Activated CD4-positive, alpha-beta memory T cell treated with anti-CD3 and anti-CD28 coated beads for 36 hours (primary cell): ENCODE measurements at regions of chr3 and their contacts with region 1.

Region 1: GRCh38 chr3:71423151-71423906 is 160.2 kb downstream of the FOXP1 start:
- DNase-seq: no peak
- H3K4me3 Mint-ChIP-seq: no peak overlapping the region
- H3K27ac Mint-ChIP-seq: peak overlapping the region; percentile 85
- H3K4me1 Mint-ChIP-seq: peaks cover 81% of the 10 kb centered on the region
- H3K27me3 Mint-ChIP-seq: no peaks in the 10 kb centered on the region

Region 2: GRCh38 chr3:71380096-71380495 is 43.2 kb before region 1 on chr3:
- CTCF ChIA-PET with region 1: no interaction called
- POLR2A ChIA-PET with region 1: interaction called, 3 read pairs
- intact Hi-C with region 1: loop called (anchors 1 kb)
- DNase-seq: no peak
- H3K4me3 Mint-ChIP-seq: no peak overlapping the region
- H3K27ac Mint-ChIP-seq: peak overlapping the region; percentile 85
- H3K4me1 Mint-ChIP-seq: peaks cover 82% of the 10 kb centered on the region
- H3K27me3 Mint-ChIP-seq: no peaks in the 10 kb centered on the region

Region 3: GRCh38 chr3:71485896-71486295 is 62.6 kb after region 1 on chr3:
- CTCF ChIA-PET with region 1: no interaction called
- POLR2A ChIA-PET with region 1: no interaction called
- intact Hi-C with region 1: no loop called
- DNase-seq: no peak
- H3K4me3 Mint-ChIP-seq: no peak overlapping the region
- H3K27ac Mint-ChIP-seq: peak overlapping the region; percentile 61
- H3K4me1 Mint-ChIP-seq: peaks cover 82% of the 10 kb centered on the region
- H3K27me3 Mint-ChIP-seq: no peaks in the 10 kb centered on the region

Region 4: DNA sequence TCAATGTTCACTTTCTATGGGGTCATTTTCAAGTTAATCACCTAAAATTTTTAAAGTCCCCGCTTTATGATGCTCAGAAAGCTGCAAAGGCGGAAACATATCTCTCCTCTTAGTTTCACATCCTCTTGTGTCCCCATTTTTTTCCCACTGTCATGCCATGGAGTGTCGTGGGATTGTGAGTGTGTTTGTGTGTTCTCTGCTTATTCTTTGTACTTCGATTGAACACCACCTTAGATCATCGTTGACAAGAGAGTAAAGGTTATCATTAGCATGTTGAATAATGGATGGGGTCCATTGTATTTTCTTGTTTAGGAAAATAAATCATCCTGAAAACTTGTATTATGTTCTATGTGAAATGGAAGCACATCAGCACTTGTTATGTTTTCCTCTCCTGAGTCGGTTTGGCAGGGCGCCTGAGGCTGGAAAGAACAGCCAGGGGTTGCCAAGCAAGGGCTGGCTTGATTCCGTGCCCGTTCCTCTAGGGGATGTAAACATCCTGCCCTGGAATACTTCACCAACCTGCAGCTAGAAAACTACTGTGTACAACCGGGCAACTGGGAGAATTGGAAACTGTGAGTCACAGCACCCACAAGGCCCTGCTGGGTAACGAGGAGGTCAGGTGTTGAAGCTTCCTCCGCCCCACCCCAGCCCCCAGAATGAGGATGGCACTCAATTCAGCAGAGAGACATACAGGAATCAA is 234.7 kb after region 1 on chr3:
- CTCF ChIA-PET with region 1: no interaction called
- POLR2A ChIA-PET with region 1: no interaction called
- intact Hi-C with region 1: no loop called
- DNase-seq: peak; percentile 15
- H3K4me3 Mint-ChIP-seq: no peak overlapping the region
- H3K27ac Mint-ChIP-seq: no peak overlapping the region
- H3K4me1 Mint-ChIP-seq: peaks cover 9% of the 10 kb centered on the region
- H3K27me3 Mint-ChIP-seq: no peaks in the 10 kb centered on the region